ENCODE measurements at regions of chr14 and their contacts with region 1.

Region 1: GRCh38 chr14:91060351-91061055 is at the start of gene RPS6KA5:
- DNase-seq: peak; percentile 100
- ATAC-seq: peak; percentile 89
- H3K4me3 ChIP-seq: peak within 1 kb of the TSS; percentile 80
- H3K27ac ChIP-seq: peak within 1 kb of the TSS; percentile 71
- H3K4me1 ChIP-seq: peaks cover 18% of the 10 kb centered on the region
- H3K27me3 ChIP-seq: no peaks in the 10 kb centered on the region
- CTCF ChIP-seq: 0 out of 2 replicates have a peak, but pooled peaks have one; percentile 19
- total RNA-seq, gene RPS6KA5: 8.6 and 10.7 TPM in 2 replicates

Region 2: DNA sequence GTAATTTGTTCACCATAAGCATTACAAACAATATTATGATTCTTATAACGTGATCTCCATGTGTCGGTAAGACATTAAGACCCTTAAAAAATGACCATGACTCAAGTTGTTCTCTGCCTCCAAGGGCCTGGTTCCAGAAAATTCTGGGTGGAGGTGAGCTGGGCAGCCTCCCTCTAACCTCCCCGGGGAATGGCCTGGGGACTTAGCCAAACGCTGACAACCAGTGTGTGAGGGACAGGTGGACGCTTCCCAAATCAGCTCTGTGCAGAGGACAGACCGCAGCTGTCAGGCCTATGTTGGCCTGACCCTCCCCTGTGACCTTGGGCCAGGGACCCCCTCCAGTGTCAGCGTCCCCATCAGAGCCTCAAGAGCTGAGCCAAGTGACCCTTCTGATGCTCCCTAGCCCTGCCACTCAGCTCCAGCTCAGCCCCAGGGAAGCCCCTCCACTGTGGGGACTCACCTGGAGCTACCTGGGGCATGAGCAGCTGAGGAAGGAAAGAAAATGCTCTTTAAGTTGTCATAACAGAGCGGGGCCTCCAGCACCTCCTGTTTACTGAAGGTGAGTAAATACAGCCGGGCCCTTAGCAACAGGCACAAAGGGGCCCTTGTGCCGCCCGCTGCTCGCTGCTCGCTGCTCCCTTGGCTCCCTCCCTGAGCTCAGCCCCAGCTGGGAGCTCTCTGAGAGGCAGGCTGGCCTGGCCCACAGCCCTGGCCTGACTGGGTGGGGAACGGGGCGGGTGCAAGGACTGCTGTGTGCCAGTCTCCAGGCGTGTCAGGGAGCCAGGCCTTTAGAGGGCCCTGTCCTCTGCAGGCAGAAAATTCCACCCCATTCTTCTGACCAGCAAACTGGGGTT is 547.1 kb before region 1 on chr14:
- CTCF ChIA-PET with region 1: no interaction called
- POLR2A ChIA-PET with region 1: interaction called, 12 read pairs
- intact Hi-C with region 1: loop called (anchors 1 kb)
- DNase-seq: peak; percentile 90
- ATAC-seq: peak; percentile 91
- H3K4me3 ChIP-seq: peak overlapping the region; percentile 13; the same call in 1 of the 2 replicates
- H3K27ac ChIP-seq: peak overlapping the region; percentile 90
- H3K4me1 ChIP-seq: peaks cover 46% of the 10 kb centered on the region
- H3K27me3 ChIP-seq: 0 out of 2 replicates have a peak, but pooled peaks cover 4% of the 10 kb centered on the region
- CTCF ChIP-seq: no peak

Region 3: GRCh38 chr14:90922141-90922540 is 138.4 kb before region 1 on chr14:
- CTCF ChIA-PET with region 1: no interaction called
- POLR2A ChIA-PET with region 1: interaction called, 10 read pairs
- intact Hi-C with region 1: no loop called
- DNase-seq: peak; percentile 50
- ATAC-seq: peak; percentile 62
- H3K4me3 ChIP-seq: no peak overlapping the region
- H3K27ac ChIP-seq: no peak overlapping the region
- H3K4me1 ChIP-seq: peaks cover 6% of the 10 kb centered on the region
- H3K27me3 ChIP-seq: no peaks in the 10 kb centered on the region
- CTCF ChIP-seq: no peak

Region 4: DNA sequence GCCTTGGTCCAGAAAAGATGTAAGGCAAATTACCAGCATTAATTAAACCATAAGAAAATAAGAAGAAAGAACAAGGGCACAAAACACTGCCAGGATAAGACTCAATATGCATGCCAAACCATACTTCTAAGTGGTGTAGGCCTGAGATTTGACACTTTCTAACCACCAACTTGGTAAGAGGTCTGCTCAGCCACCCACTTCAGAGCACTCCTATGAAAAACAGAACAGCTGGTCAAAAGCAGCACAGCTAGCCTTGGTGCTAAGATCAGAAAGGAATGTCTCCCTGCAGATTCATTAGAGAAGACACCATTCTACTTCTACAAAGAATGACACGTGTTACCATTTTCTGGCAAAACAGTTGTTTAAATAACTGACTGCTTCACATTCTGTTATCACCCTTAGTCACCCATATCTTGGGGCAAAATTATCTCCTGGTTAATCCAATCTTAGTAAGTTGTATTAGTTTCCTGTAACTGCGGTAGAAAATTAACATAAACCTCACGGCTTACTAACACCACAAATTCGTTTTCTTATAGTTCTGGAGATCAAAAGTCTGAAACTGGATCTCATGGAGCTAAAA is 13.2 kb before region 1 on chr14:
- CTCF ChIA-PET with region 1: no interaction called
- POLR2A ChIA-PET with region 1: no interaction called
- intact Hi-C with region 1: no loop called
- DNase-seq: no peak
- ATAC-seq: no peak
- H3K4me3 ChIP-seq: no peak overlapping the region
- H3K27ac ChIP-seq: no peak overlapping the region
- H3K4me1 ChIP-seq: no peaks in the 10 kb centered on the region
- H3K27me3 ChIP-seq: no peaks in the 10 kb centered on the region
- CTCF ChIP-seq: no peak

Region 5: DNA sequence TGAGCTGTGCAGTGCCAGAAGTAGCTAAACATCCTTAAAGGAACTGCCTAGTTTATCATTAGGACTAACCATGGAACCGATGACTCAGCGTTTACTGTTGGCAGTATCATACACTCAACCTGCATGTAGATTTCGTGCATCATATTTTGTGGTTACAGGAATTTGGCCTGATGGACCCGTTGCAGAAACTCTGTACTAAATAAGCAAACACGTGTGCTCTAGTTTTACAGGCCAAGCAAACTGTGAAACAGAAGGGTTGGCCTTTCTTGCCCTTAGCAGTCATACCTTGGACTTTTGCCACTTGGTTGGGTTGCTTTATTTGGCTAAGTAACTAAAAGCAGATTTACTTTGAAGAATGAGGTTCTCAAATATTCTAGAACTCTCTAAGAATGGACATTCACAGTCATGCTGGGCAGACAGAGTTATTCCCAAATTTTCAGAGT is 89.0 kb after region 1 on chr14:
- CTCF ChIA-PET with region 1: no interaction called
- POLR2A ChIA-PET with region 1: no interaction called
- intact Hi-C with region 1: loop called (anchors 2 kb)
- DNase-seq: peak; percentile 100
- ATAC-seq: peak; percentile 98
- H3K4me3 ChIP-seq: no peak overlapping the region
- H3K27ac ChIP-seq: peak overlapping the region; percentile 43
- H3K4me1 ChIP-seq: peaks cover 12% of the 10 kb centered on the region
- H3K27me3 ChIP-seq: no peaks in the 10 kb centered on the region
- CTCF ChIP-seq: no peak

Region 6: GRCh38 chr14:91286530-91286937 is 226.0 kb after region 1 on chr14:
- CTCF ChIA-PET with region 1: no interaction called
- POLR2A ChIA-PET with region 1: no interaction called
- intact Hi-C with region 1: loop called (anchors 2 kb)
- DNase-seq: peak; percentile 86
- ATAC-seq: peak; percentile 64
- H3K4me3 ChIP-seq: no peak overlapping the region
- H3K27ac ChIP-seq: no peak overlapping the region
- H3K4me1 ChIP-seq: peaks cover 28% of the 10 kb centered on the region
- H3K27me3 ChIP-seq: no peaks in the 10 kb centered on the region
- CTCF ChIP-seq: peak; percentile 93

Measured in PC-3 (cell line).